Activated naive CD4-positive, alpha-beta T cell treated with anti-CD3 and anti-CD28 coated beads for 36 hours (primary cell): ENCODE measurements at regions of chr11 and their contacts with region 1.

Region 1: GRCh38 chr11:128422576-128423370 is 164.6 kb downstream of the ETS1 start:
- DNase-seq: peak; percentile 96
- H3K4me3 Mint-ChIP-seq: peak overlapping the region; percentile 44
- H3K27ac Mint-ChIP-seq: peak overlapping the region; percentile 75
- H3K4me1 Mint-ChIP-seq: peaks cover 63% of the 10 kb centered on the region
- H3K27me3 Mint-ChIP-seq: no peaks in the 10 kb centered on the region

Region 2: DNA sequence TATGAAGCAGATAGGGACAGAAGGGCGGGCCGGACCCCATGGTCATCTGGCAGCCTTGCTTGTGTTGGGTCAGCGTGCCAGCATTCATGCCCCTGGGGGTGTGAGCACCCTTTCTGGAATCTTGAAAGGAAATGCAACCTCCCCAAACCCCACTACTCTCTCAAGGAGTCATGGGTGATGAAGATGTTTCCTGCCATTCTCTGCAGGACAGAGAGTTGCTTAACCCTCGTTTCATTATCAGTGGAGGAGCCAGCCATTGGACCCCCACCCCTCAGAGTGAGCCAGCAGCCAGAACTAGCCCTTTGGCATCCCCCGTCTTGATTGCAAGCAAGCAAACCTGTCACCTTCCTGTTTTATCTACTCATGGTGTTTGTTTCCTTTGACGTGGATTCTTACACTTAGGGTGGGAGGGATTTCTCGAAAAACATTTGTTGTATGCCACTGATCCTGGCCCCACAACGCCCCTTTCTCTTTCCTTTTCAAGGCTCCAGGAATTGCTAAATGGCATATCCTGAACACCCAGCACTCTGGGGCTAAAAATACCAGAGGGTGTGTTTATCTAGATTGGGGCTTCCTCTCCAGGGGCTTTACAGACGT is 93.7 kb before region 1 on chr11:
- CTCF ChIA-PET with region 1: interaction called, 6 read pairs
- intact Hi-C with region 1: loop called (anchors 1 kb)
- DNase-seq: peak; percentile 85
- H3K4me3 Mint-ChIP-seq: peak overlapping the region; percentile 33
- H3K27ac Mint-ChIP-seq: peak overlapping the region; percentile 92
- H3K4me1 Mint-ChIP-seq: peaks cover 72% of the 10 kb centered on the region
- H3K27me3 Mint-ChIP-seq: no peaks in the 10 kb centered on the region

Region 3: GRCh38 chr11:128379587-128380580 is 42.9 kb before region 1 on chr11:
- CTCF ChIA-PET with region 1: no interaction called
- intact Hi-C with region 1: no loop called
- DNase-seq: peak; percentile 56
- H3K4me3 Mint-ChIP-seq: no peak overlapping the region
- H3K27ac Mint-ChIP-seq: peak overlapping the region; percentile 61
- H3K4me1 Mint-ChIP-seq: peaks cover 37% of the 10 kb centered on the region
- H3K27me3 Mint-ChIP-seq: no peaks in the 10 kb centered on the region

Region 4: DNA sequence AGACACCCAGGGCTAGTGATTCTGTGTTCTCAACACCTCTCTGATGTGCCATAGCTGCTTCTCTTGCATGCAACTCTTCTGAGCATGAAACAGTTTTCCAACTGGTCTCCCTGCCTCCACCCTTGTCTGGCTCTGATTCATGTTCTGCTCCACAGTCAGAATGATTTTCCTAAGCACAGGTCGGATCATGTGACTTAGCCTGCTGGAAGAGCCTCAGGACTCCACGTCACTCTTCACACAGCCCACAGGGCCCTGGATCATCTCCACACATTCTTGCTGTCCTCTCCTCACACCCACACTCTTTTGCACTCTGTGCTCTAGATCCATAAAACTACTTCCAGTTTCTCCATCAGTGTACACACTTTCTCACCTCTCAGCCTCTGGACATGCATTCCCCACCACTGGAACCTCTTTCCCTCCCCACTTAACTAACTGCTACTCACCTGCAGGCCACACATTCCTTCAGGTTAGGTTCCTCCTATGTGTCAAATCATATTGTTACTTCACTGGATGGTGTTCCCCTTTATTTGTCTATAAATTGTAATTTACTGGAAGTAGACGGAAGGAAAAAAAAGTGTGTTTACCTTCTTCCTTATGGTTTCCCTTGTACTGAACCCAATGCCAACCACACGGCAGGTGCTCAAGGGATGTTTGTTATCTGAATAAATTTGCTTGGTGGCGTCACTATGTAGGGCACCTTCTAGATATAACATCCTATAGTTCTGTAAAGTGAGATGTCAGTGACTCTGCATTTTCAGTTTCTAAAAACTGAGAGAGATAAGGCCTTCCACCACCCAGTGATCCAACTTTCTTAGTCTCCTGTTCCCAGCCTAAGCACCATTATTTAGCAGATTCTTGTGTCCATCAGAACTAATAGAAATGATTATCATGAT is 30.9 kb after region 1 on chr11:
- CTCF ChIA-PET with region 1: no interaction called
- intact Hi-C with region 1: loop called (anchors 2 kb)
- DNase-seq: no peak
- H3K4me3 Mint-ChIP-seq: no peak overlapping the region
- H3K27ac Mint-ChIP-seq: peak overlapping the region; percentile 15
- H3K4me1 Mint-ChIP-seq: peaks cover 60% of the 10 kb centered on the region
- H3K27me3 Mint-ChIP-seq: no peaks in the 10 kb centered on the region

Region 5: GRCh38 chr11:128465946-128466705 is 43.4 kb after region 1 on chr11:
- CTCF ChIA-PET with region 1: interaction called, 3 read pairs
- intact Hi-C with region 1: loop called (anchors 1 kb)
- DNase-seq: peak; percentile 74
- H3K4me3 Mint-ChIP-seq: peak overlapping the region; percentile 74
- H3K27ac Mint-ChIP-seq: peak overlapping the region; percentile 97
- H3K4me1 Mint-ChIP-seq: peaks cover 94% of the 10 kb centered on the region
- H3K27me3 Mint-ChIP-seq: no peaks in the 10 kb centered on the region